CD4-positive, alpha-beta memory T cell (primary cell): ENCODE measurements at regions of chr3 and their contacts with region 1.

Region 1: GRCh38 chr3:171566803-171567422 is 106.7 kb upstream of the TNIK start:
- DNase-seq: peak in 4 of 5 donors; percentile 52 to 63 (median 59)
- H3K4me3 ChIP-seq: no peak overlapping the region
- H3K4me3 Mint-ChIP-seq: no peak overlapping the region
- H3K27ac ChIP-seq: no peak overlapping the region
- H3K27ac Mint-ChIP-seq: no peak overlapping the region
- H3K4me1 ChIP-seq: peaks cover 10% of the 10 kb centered on the region
- H3K4me1 Mint-ChIP-seq: peaks cover 3 to 7% (median 5%) of the 10 kb centered on the region in 4 donors
- H3K27me3 ChIP-seq: no peaks in the 10 kb centered on the region
- H3K27me3 Mint-ChIP-seq: peaks cover 2 to 3% of the 10 kb centered on the region in 2 donors

Region 2: GRCh38 chr3:170961616-170962400 is 605.1 kb before region 1 on chr3:
- CTCF ChIA-PET with region 1: interaction called, 21 read pairs
- POLR2A ChIA-PET with region 1: no interaction called
- intact Hi-C with region 1: no loop called
- DNase-seq: peak in 3 of 5 donors; percentile 10 to 16 (median 15)
- H3K4me3 ChIP-seq: no peak overlapping the region
- H3K4me3 Mint-ChIP-seq: no peak overlapping the region
- H3K27ac ChIP-seq: no peak overlapping the region
- H3K27ac Mint-ChIP-seq: no peak overlapping the region
- H3K4me1 ChIP-seq: no peaks in the 10 kb centered on the region
- H3K4me1 Mint-ChIP-seq: no peaks in the 10 kb centered on the region
- H3K27me3 ChIP-seq: no peaks in the 10 kb centered on the region
- H3K27me3 Mint-ChIP-seq: peaks cover 0 to 2% of the 10 kb centered on the region in 2 donors

Region 3: DNA sequence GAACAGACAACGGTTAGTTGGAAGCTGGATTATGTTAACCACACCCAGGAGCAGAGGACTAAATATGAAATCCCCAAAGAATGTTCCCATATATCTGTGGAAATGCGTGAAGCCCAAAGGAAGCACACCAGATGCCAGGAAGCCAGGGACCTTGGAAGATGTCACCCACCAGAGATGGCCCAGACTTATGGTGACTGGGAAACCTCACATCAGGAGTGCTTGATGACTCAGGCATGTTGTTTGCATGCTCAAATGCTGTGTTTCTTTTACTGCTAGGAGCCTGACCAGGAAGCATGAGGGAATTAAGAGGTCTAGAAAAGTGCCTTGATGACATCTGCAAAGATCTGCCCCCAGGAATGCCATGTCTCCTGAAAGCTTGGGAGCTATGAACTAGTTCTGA is 431.4 kb before region 1 on chr3:
- CTCF ChIA-PET with region 1: interaction called, 12 read pairs
- POLR2A ChIA-PET with region 1: no interaction called
- intact Hi-C with region 1: no loop called
- DNase-seq: no peak
- H3K4me3 ChIP-seq: no peak overlapping the region
- H3K4me3 Mint-ChIP-seq: no peak overlapping the region
- H3K27ac ChIP-seq: no peak overlapping the region
- H3K27ac Mint-ChIP-seq: peak overlapping the region in 3 of 7 donors; percentile 8 to 57 (median 15)
- H3K4me1 ChIP-seq: no peaks in the 10 kb centered on the region
- H3K4me1 Mint-ChIP-seq: peaks cover 0 to 14% (median 7%) of the 10 kb centered on the region in 4 donors
- H3K27me3 ChIP-seq: no peaks in the 10 kb centered on the region
- H3K27me3 Mint-ChIP-seq: no peaks in the 10 kb centered on the region

Region 4: DNA sequence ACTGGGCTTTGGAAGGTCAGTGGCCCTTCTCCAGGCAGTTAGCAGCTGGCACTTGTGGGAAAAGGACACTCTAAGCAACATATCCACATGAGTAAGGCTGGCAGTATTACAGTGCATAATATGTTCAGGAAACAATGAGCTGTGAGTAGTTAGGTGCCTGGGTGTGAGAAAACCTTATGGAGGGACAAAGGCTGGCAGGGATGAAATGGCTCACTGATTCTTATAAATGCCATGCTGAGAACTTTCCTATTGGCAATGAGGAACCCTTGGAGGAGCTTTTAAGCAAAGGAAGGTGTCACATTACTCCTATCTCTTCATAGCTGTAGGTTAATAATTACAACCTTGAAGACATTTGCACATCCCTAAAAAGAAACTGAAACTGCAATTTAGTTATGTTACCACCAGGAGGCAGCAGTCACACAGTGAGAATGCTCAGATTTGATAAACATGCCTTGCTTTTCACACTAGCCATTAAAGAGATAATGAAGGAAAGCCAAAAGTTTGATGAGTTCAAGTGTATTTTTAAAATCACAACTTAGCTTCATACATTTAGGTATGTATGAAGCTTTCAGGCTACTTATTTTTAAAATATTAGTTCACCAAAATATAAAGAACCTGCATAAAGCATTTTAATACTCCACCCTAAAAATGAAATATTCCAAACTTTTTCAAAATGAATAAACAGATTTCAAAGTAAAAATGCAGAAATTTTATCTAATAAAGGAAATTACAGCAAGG is 403.8 kb before region 1 on chr3:
- CTCF ChIA-PET with region 1: interaction called, 42 read pairs
- POLR2A ChIA-PET with region 1: no interaction called
- intact Hi-C with region 1: loop called (anchors 1 kb)
- DNase-seq: peak in 4 of 5 donors; percentile 24 to 33 (median 33)
- H3K4me3 ChIP-seq: no peak overlapping the region
- H3K4me3 Mint-ChIP-seq: no peak overlapping the region
- H3K27ac ChIP-seq: no peak overlapping the region
- H3K27ac Mint-ChIP-seq: peak overlapping the region in 2 of 7 donors; percentile 5 to 50
- H3K4me1 ChIP-seq: peaks cover 23% of the 10 kb centered on the region
- H3K4me1 Mint-ChIP-seq: peaks cover 19 to 30% (median 24%) of the 10 kb centered on the region in 4 donors
- H3K27me3 ChIP-seq: no peaks in the 10 kb centered on the region
- H3K27me3 Mint-ChIP-seq: no peaks in the 10 kb centered on the region

Region 5: GRCh38 chr3:171328419-171329082 is 238.4 kb before region 1 on chr3:
- CTCF ChIA-PET with region 1: interaction called, 36 read pairs
- POLR2A ChIA-PET with region 1: no interaction called
- intact Hi-C with region 1: loop called (anchors 1 kb)
- DNase-seq: peak; percentile 52 to 68 (median 63)
- H3K4me3 ChIP-seq: no peak overlapping the region
- H3K4me3 Mint-ChIP-seq: peak overlapping the region in 7 of 8 donors; percentile 1 to 74 (median 60)
- H3K27ac ChIP-seq: no peak overlapping the region
- H3K27ac Mint-ChIP-seq: peak overlapping the region in 5 of 7 donors; percentile 51 to 84 (median 72)
- H3K4me1 ChIP-seq: peaks cover 40% of the 10 kb centered on the region
- H3K4me1 Mint-ChIP-seq: peaks cover 35 to 76% (median 60%) of the 10 kb centered on the region in 4 donors
- H3K27me3 ChIP-seq: no peaks in the 10 kb centered on the region
- H3K27me3 Mint-ChIP-seq: no peaks in the 10 kb centered on the region